Esophagus muscularis mucosa (tissue), 4 donors: ENCODE measurements at regions of chr2 and their contacts with region 1.

Region 1: GRCh38 chr2:3461801-3462492 is 57.4 kb downstream of the ADI1 start:
- DNase-seq: no peak
- H3K4me3 ChIP-seq: peak overlapping the region in 1 of 4 donors; percentile 9
- H3K27ac ChIP-seq: peak overlapping the region; percentile 49 to 67 (median 60)
- H3K4me1 ChIP-seq: peaks cover 7 to 23% (median 13%) of the 10 kb centered on the region in 4 donors
- H3K27me3 ChIP-seq: no peaks in the 10 kb centered on the region
- CTCF ChIP-seq: peak; percentile 73 to 96 (median 73)
- EP300 ChIP-seq: no peak
- POLR2A ChIP-seq: no peak

Region 2: GRCh38 chr2:1854729-1855547 is 1607.0 kb before region 1 on chr2:
- intact Hi-C with region 1: loop called (anchors 10 kb)
- DNase-seq: no peak
- H3K4me3 ChIP-seq: peak overlapping the region in 1 of 4 donors; percentile 20
- H3K27ac ChIP-seq: no peak overlapping the region
- H3K4me1 ChIP-seq: peaks cover 0 to 11% (median 10%) of the 10 kb centered on the region in 4 donors
- H3K27me3 ChIP-seq: peaks cover 0 to 44% (median 0%) of the 10 kb centered on the region in 4 donors
- CTCF ChIP-seq: peak; percentile 19 to 58 (median 24)
- EP300 ChIP-seq: no peak
- POLR2A ChIP-seq: no peak

Region 3: DNA sequence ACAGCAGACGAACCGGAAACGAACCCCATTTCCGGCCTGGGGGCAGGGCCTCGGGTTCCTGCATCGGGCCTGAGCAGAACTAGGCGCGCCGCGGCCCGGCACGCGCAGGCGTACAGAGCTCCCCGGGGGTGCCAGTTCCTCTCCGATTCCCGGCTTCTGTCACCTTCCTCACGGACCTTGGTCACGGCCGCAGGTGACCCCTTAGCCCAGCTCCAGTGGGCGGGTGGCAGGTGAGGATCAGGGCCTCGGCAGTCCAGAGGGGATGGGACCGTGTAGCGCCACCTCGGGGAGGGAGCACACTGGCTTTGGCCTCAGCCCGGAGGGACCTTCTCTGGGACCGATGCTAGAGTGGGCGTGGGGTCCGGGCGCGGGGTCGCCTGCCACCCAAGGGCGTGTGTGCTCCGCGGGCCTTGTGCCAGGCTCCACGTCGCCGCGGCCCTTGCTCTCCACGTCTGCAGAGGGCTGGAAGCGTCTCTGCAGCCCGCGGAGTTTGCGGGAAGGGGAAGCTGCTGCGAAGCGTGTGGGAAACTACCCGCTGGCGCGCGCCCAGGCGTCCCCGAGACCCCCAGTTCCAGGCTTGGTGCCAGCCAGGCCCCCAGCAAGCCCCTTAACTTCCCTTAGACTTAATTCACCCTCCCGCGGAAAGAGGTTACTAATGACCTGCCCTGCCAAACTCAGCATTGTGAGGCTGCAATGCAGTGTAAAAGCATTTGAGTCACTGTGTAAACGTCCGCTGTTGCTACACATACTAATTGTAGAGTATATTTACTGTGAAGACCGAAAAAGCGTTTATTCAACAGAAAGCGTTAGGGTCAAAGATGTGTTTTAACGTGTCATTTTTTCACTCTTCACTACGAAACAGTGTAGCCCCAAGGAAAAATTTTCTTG is 82.1 kb before region 1 on chr2 and contains the start of gene TRAPPC12:
- intact Hi-C with region 1: loop called (anchors 5 kb)
- DNase-seq: peak; percentile 98
- H3K4me3 ChIP-seq: peak within 1 kb of the TSS; percentile 74 to 90 (median 86)
- H3K27ac ChIP-seq: peak within 1 kb of the TSS; percentile 87 to 94 (median 91)
- H3K4me1 ChIP-seq: peaks cover 27 to 43% (median 42%) of the 10 kb centered on the region in 4 donors
- H3K27me3 ChIP-seq: no peaks in the 10 kb centered on the region
- CTCF ChIP-seq: peak; percentile 34 to 45 (median 44)
- EP300 ChIP-seq: no peak
- POLR2A ChIP-seq: peak; percentile 60
- total RNA-seq, gene TRAPPC12: 65.6 to 89.3 (median 72.6) TPM

Region 4: GRCh38 chr2:3423492-3424175 is 38.3 kb before region 1 on chr2:
- intact Hi-C with region 1: loop called (anchors 5 kb)
- DNase-seq: no peak
- H3K4me3 ChIP-seq: no peak overlapping the region
- H3K27ac ChIP-seq: no peak overlapping the region
- H3K4me1 ChIP-seq: peaks cover 0 to 26% (median 22%) of the 10 kb centered on the region in 4 donors
- H3K27me3 ChIP-seq: no peaks in the 10 kb centered on the region
- CTCF ChIP-seq: peak in 2 of 3 experiments; percentile 82 to 94
- EP300 ChIP-seq: no peak
- POLR2A ChIP-seq: no peak